ENCODE measurements at regions of chr19 and their contacts with region 1.

Region 1: DNA sequence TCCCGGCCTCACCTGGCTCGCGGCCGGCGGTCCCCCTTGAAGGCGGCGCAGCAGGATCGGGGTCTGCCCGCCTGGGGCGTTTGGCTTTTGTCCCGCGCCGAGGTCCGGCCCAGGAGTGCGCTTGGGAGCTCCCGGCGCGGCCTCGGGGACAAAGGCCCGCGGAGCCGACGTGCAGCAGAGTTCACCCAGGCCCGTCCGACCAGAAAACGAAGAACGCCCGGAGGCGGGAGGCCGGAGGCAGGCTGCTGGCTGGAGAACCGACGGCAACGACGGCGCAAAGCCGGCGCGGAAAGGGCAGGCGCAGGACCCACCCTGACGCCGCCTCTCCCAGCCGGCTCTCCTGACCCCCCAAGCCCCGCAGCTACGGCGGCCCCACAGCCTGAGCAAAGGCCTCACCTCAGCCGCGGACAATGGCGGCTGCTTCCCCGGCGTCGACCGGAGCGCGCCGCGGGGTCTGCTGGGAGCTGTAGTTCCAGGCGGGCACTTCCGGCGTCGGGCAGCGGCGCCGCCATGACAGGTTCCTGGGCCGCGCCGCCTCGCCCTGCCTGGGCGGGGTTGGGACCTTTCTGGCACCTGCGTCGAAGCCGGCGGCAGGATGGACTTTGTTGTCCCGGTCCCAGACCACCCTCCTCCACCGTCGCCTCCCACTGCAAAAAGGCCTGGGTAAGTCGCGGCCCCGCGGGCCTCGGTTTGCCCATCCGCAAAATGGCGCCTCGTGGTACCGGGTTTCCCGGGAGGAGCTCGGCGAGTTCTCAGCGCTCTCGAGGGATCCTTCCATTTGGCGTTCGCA is at the start of gene ZNF606:
- DNase-seq: peak; percentile 83 to 89 (median 86)
- H3K4me3 ChIP-seq: peak within 1 kb of the TSS; percentile 93 to 98
- H3K4me3 Mint-ChIP-seq: peak within 1 kb of the TSS; percentile 76 to 87 (median 84)
- H3K27ac ChIP-seq: peak within 1 kb of the TSS; percentile 80
- H3K27ac Mint-ChIP-seq: peak within 1 kb of the TSS; percentile 78 to 93 (median 87)
- H3K4me1 ChIP-seq: peaks cover 22% of the 10 kb centered on the region
- H3K4me1 Mint-ChIP-seq: peaks cover 15 to 34% (median 26%) of the 10 kb centered on the region in 4 donors
- H3K27me3 ChIP-seq: no peaks in the 10 kb centered on the region
- H3K27me3 Mint-ChIP-seq: no peaks in the 10 kb centered on the region
- total RNA-seq, gene ZNF606: 25.5 to 37.3 TPM

Region 2: GRCh38 chr19:57191141-57192076 is 811.2 kb before region 1 on chr19 and contains the start of gene ZNF264:
- CTCF ChIA-PET with region 1: no interaction called
- POLR2A ChIA-PET with region 1: interaction called, 10 read pairs
- intact Hi-C with region 1: no loop called
- DNase-seq: peak; percentile 88 to 90 (median 88)
- H3K4me3 ChIP-seq: peak within 1 kb of the TSS; percentile 57 to 73
- H3K4me3 Mint-ChIP-seq: peak within 1 kb of the TSS; percentile 91 to 94 (median 93)
- H3K27ac ChIP-seq: peak within 1 kb of the TSS; percentile 77
- H3K27ac Mint-ChIP-seq: peak within 1 kb of the TSS; percentile 94 to 98 (median 96)
- H3K4me1 ChIP-seq: peaks cover 23% of the 10 kb centered on the region
- H3K4me1 Mint-ChIP-seq: peaks cover 19 to 54% (median 36%) of the 10 kb centered on the region in 4 donors
- H3K27me3 ChIP-seq: no peaks in the 10 kb centered on the region
- H3K27me3 Mint-ChIP-seq: peaks cover 6 to 7% of the 10 kb centered on the region in 2 donors
- total RNA-seq, gene ZNF264: 62.5 to 64.1 TPM

Region 3: GRCh38 chr19:57435062-57435978 is 567.3 kb before region 1 on chr19 and contains the start of gene ZNF749:
- CTCF ChIA-PET with region 1: interaction called, 3 read pairs
- POLR2A ChIA-PET with region 1: no interaction called
- intact Hi-C with region 1: loop called (anchors 10 kb)
- DNase-seq: peak; percentile 95 to 99 (median 97)
- H3K4me3 ChIP-seq: peak within 1 kb of the TSS; percentile 62 to 70
- H3K4me3 Mint-ChIP-seq: peak within 1 kb of the TSS; percentile 96 to 100 (median 98)
- H3K27ac ChIP-seq: peak within 1 kb of the TSS; percentile 66
- H3K27ac Mint-ChIP-seq: peak within 1 kb of the TSS; percentile 83 to 99 (median 97)
- H3K4me1 ChIP-seq: peaks cover 13% of the 10 kb centered on the region
- H3K4me1 Mint-ChIP-seq: peaks cover 22 to 36% (median 28%) of the 10 kb centered on the region in 4 donors
- H3K27me3 ChIP-seq: no peaks in the 10 kb centered on the region
- H3K27me3 Mint-ChIP-seq: peaks cover 0 to 2% of the 10 kb centered on the region in 2 donors
- total RNA-seq, gene ZNF749: 14.8 to 15.2 TPM

Region 4: GRCh38 chr19:57613941-57614743 is 388.4 kb before region 1 on chr19 and contains the start of gene ZNF134:
- CTCF ChIA-PET with region 1: no interaction called
- POLR2A ChIA-PET with region 1: no interaction called
- intact Hi-C with region 1: loop called (anchors 1 kb)
- DNase-seq: peak; percentile 86 to 88 (median 87)
- H3K4me3 ChIP-seq: peak within 1 kb of the TSS; percentile 78 to 92
- H3K4me3 Mint-ChIP-seq: peak within 1 kb of the TSS; percentile 89 to 94 (median 92)
- H3K27ac ChIP-seq: peak within 1 kb of the TSS; percentile 58
- H3K27ac Mint-ChIP-seq: peak within 1 kb of the TSS; percentile 57 to 90 (median 88)
- H3K4me1 ChIP-seq: peaks cover 18% of the 10 kb centered on the region
- H3K4me1 Mint-ChIP-seq: peaks cover 17 to 42% (median 32%) of the 10 kb centered on the region in 4 donors
- H3K27me3 ChIP-seq: no peaks in the 10 kb centered on the region
- H3K27me3 Mint-ChIP-seq: no peaks in the 10 kb centered on the region
- total RNA-seq, gene ZNF134: 32.1 to 32.3 TPM

Region 5: DNA sequence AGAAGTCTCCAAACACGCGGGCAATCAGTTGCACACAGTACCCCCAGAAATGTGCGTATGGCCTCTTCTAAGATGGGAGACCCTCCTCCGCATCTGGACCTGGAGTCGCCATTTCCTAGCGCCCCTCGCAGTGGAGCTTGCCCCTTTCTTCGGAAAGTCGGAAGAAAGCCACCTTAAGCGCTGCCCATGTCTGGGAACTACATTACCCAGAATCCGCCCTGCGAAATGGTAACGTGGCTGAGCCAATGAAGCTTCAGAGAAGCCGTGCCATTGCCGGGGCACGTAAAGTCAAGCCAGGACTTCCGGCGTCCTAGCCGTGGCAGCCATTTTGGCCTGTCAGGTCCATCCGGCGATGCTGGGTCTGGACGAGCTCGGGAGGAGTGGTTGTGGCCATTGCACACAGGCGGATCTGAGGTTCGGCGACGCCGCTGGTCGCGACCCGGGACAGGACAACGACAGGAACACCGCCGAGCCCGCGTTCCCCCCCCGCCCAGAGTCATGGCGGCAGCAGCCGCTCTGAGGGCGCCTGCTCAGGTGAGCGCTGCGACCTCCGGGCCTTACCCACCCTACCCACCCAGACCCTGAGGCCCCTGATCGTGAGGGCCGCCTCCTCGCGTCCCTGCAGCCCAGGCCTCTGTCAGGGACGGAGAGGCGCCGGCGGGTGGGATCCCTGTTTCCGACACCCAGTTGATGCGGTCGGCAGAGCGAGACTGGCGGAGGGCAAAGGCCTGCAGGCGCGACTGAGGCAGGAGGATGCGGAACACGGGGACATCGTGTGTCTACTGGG is 233.0 kb before region 1 on chr19 and contains the start of gene ZNF586:
- CTCF ChIA-PET with region 1: no interaction called
- POLR2A ChIA-PET with region 1: interaction called, 6 read pairs
- intact Hi-C with region 1: loop called (anchors 1 kb)
- DNase-seq: peak; percentile 82 to 91 (median 85)
- H3K4me3 ChIP-seq: peak within 1 kb of the TSS; percentile 62 to 75
- H3K4me3 Mint-ChIP-seq: peak within 1 kb of the TSS; percentile 96 to 99 (median 96)
- H3K27ac ChIP-seq: peak within 1 kb of the TSS; percentile 75
- H3K27ac Mint-ChIP-seq: peak within 1 kb of the TSS; percentile 91 to 98 (median 96)
- H3K4me1 ChIP-seq: peaks cover 20% of the 10 kb centered on the region
- H3K4me1 Mint-ChIP-seq: peaks cover 23 to 51% (median 33%) of the 10 kb centered on the region in 4 donors
- H3K27me3 ChIP-seq: no peaks in the 10 kb centered on the region
- H3K27me3 Mint-ChIP-seq: no peaks in the 10 kb centered on the region
- total RNA-seq, gene ZNF586: 46.4 to 51.7 TPM

Region 6: DNA sequence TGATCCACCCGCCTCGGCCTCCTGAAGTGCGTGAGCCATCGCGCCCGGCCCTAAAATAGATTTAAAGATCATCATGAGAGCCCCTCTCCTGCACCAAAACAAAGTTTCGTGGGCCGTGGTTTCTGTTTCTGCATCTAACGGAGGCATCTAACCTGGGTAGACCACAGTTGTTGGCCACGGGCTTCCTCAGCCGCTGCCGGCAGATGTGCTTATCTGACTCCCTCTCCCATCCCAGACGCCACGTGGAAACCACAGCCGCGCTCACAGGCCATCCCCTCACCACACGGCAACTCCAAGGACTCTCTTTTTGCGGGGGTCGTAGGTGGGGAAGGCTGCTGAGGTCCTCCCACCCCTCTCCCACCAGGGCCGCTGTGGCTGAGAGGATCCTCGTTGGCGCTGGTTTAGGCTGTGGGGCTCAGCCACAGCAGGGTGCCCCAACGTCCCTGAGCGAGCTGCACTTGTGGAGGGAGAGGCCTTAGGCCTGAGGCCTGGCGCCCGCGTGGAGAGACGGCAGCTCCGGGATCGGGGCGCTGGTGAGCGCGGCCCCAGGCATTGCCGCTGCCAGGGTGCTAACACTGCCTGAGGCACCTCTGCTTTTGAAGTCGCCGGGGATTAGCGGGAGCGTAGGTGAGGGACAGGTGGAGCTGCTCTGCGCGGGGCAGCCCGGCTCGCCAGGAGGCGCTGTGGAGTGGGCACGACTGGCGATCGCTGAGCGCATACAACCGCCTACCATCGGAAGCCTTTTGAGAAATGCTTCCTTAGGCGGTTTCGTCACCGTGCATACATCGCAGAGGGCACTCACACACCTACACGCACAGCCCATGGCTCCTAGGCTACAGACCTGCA is 40.1 kb after region 1 on chr19:
- CTCF ChIA-PET with region 1: no interaction called
- POLR2A ChIA-PET with region 1: no interaction called
- intact Hi-C with region 1: no loop called
- DNase-seq: no peak
- H3K4me3 ChIP-seq: no peak overlapping the region
- H3K4me3 Mint-ChIP-seq: no peak overlapping the region
- H3K27ac ChIP-seq: no peak overlapping the region
- H3K27ac Mint-ChIP-seq: peak overlapping the region in 1 of 7 donors; percentile 12
- H3K4me1 ChIP-seq: no peaks in the 10 kb centered on the region
- H3K4me1 Mint-ChIP-seq: no peaks in the 10 kb centered on the region
- H3K27me3 ChIP-seq: no peaks in the 10 kb centered on the region
- H3K27me3 Mint-ChIP-seq: peaks cover 0 to 2% of the 10 kb centered on the region in 2 donors

Region 7: DNA sequence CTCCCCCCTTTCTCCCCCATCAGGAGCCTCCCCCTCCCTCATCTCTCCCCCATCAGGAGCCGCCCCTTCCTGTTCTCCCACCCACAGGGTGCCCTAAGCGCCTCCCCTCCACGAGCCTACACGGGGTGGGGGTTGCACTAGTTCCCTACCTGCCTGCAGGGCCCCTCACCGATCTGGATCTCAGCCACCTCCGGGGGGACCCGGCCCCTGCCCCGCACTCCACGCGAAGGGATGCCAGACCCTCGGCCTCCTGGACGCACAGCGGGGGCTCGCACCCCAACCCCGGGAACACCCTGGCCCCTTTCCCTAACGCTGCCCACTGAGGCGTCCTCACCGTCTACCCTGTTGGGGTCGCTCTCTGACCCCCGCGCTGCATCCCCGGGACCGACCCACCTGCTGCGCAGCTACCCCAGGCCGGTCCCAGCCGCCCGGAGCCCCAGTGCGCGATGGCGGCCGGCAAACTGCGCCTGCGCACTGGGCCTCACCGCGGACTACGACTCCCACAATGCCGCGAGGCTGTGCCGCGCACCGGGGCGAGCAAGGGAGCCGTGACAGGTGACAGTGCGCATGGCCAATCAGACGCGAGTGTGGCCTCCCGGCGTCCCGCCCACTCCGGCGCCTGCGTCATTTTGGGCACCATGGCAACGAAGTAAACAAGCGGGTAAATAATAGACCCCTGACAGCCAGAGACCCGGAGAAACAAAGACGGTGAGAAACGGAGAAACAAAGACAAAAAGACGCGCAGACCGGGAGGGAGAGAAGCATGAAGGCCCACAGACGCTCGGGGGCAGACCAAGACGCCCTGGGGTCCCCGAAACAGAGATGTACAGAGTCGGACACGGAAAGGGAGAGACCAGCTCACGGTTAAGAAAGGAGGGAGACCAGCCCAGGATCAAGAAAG is 95.5 kb after region 1 on chr19 and contains the start of gene ZSCAN18:
- CTCF ChIA-PET with region 1: interaction called, 3 read pairs
- POLR2A ChIA-PET with region 1: interaction called, 7 read pairs
- intact Hi-C with region 1: loop called (anchors 1 kb)
- DNase-seq: peak; percentile 98 to 99 (median 99)
- H3K4me3 ChIP-seq: peak within 1 kb of the TSS; percentile 61 to 69
- H3K4me3 Mint-ChIP-seq: peak within 1 kb of the TSS; percentile 88 to 97 (median 92)
- H3K27ac ChIP-seq: peak within 1 kb of the TSS; percentile 98
- H3K27ac Mint-ChIP-seq: peak within 1 kb of the TSS; percentile 100
- H3K4me1 ChIP-seq: peaks cover 5% of the 10 kb centered on the region
- H3K4me1 Mint-ChIP-seq: peaks cover 7 to 28% (median 14%) of the 10 kb centered on the region in 4 donors
- H3K27me3 ChIP-seq: no peaks in the 10 kb centered on the region
- H3K27me3 Mint-ChIP-seq: peaks cover 0 to 3% of the 10 kb centered on the region in 2 donors
- total RNA-seq, gene ZSCAN18: 63.2 to 69.1 TPM